Activated CD8-positive, alpha-beta memory T cell treated with anti-CD3 and anti-CD28 coated beads, Interleukin-2, amount 10 ng/mL, durations not matched to agents 7 days and 5 days (primary cell): ENCODE measurements at regions of chr22 and their contacts with region 1.

Region 1: GRCh38 chr22:28829358-28830181 is 29.2 kb upstream of the XBP1 start:
- DNase-seq: peak; percentile 85
- ATAC-seq: peak; percentile 69
- H3K4me3 Mint-ChIP-seq: no peak overlapping the region
- H3K27ac Mint-ChIP-seq: peak overlapping the region; percentile 57
- H3K4me1 Mint-ChIP-seq: peaks cover 43% of the 10 kb centered on the region
- H3K27me3 Mint-ChIP-seq: peaks cover 4% of the 10 kb centered on the region

Region 2: DNA sequence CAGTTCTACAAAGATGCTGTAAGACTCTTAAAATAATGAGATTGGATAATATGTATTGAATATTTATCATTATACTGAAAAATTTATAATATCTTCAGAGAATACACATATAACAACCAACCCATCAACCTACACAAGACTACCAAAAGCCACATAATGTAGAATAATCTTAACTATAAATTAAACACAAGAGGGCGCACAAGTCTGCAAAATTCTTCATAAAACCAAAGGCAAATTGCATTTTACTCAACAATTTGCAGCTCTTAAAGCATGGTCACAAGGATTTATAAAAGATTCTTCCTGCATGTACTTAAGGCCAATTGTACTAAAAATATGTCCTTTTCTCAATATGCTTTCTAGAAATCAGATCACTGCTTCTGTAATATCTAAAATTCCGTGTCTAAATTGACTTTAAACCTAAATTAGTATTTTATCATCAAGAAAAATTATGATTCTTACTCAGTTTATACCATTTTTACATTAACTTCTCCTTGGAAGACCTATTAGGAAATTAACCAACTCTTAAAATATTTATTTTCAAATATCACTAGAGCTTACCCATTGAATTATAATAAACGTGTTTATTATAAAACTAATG is 228.9 kb before region 1 on chr22:
- CTCF ChIA-PET with region 1: interaction called, 30 read pairs
- DNase-seq: no peak
- ATAC-seq: no peak
- H3K4me3 Mint-ChIP-seq: no peak overlapping the region
- H3K27ac Mint-ChIP-seq: no peak overlapping the region
- H3K4me1 Mint-ChIP-seq: no peaks in the 10 kb centered on the region
- H3K27me3 Mint-ChIP-seq: peaks cover 52% of the 10 kb centered on the region

Region 3: GRCh38 chr22:28750471-28750881 is 79.1 kb before region 1 on chr22:
- CTCF ChIA-PET with region 1: no interaction called
- DNase-seq: no peak
- ATAC-seq: no peak
- H3K4me3 Mint-ChIP-seq: no peak overlapping the region
- H3K27ac Mint-ChIP-seq: no peak overlapping the region
- H3K4me1 Mint-ChIP-seq: peaks cover 34% of the 10 kb centered on the region
- H3K27me3 Mint-ChIP-seq: no peaks in the 10 kb centered on the region

Region 4: GRCh38 chr22:28772633-28773460 is 56.7 kb before region 1 on chr22 and contains the start of gene CCDC117:
- CTCF ChIA-PET with region 1: interaction called, 16 read pairs
- DNase-seq: peak; percentile 97
- ATAC-seq: peak; percentile 94
- H3K4me3 Mint-ChIP-seq: peak within 1 kb of the TSS; percentile 91
- H3K27ac Mint-ChIP-seq: peak within 1 kb of the TSS; percentile 97
- H3K4me1 Mint-ChIP-seq: peaks cover 28% of the 10 kb centered on the region
- H3K27me3 Mint-ChIP-seq: peaks cover 7% of the 10 kb centered on the region
- total RNA-seq, gene CCDC117: 35.5 to 42.4 TPM

Region 5: DNA sequence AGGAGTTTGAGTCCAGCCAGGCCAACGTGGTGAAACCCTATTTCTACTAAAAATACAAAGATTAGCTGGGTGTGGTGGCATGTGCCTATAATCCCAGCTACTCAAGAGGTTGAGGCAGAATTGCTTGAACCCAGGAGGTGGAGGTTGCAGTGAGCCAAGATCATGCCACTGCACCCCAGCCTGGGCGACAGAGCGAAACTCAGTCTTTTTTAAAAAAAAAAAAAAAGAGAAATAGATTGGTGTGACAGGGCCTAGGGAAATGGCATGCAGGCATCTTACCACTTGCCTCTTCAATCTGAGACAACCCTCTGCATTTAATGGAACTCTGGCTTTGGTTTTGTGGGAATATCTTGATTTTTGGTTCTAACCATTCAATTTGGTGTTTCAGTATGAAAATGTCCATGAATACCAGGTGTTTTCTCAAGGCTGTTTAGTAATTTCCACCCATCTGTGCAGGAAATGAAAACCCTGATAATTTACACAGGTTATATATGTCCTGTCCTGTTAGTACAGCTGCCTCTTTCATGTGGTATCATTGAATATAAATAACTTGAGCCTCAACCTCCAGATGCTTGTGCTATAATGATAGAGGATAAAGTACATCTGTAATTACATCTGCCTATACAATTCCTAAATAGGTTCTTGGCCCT is 37.6 kb before region 1 on chr22:
- CTCF ChIA-PET with region 1: interaction called, 89 read pairs
- DNase-seq: no peak
- ATAC-seq: peak; percentile 48
- H3K4me3 Mint-ChIP-seq: peak overlapping the region; percentile 10
- H3K27ac Mint-ChIP-seq: peak overlapping the region; percentile 81
- H3K4me1 Mint-ChIP-seq: peaks cover 60% of the 10 kb centered on the region
- H3K27me3 Mint-ChIP-seq: no peaks in the 10 kb centered on the region

Region 6: GRCh38 chr22:28800308-28801077 is 29.1 kb before region 1 on chr22 and contains the start of gene XBP1:
- CTCF ChIA-PET with region 1: interaction called, 84 read pairs
- DNase-seq: peak; percentile 90
- ATAC-seq: peak; percentile 95
- H3K4me3 Mint-ChIP-seq: peak within 1 kb of the TSS; percentile 91
- H3K27ac Mint-ChIP-seq: peak within 1 kb of the TSS; percentile 92
- H3K4me1 Mint-ChIP-seq: peaks cover 45% of the 10 kb centered on the region
- H3K27me3 Mint-ChIP-seq: no peaks in the 10 kb centered on the region
- total RNA-seq, gene XBP1: 139 to 141 TPM

Region 7: DNA sequence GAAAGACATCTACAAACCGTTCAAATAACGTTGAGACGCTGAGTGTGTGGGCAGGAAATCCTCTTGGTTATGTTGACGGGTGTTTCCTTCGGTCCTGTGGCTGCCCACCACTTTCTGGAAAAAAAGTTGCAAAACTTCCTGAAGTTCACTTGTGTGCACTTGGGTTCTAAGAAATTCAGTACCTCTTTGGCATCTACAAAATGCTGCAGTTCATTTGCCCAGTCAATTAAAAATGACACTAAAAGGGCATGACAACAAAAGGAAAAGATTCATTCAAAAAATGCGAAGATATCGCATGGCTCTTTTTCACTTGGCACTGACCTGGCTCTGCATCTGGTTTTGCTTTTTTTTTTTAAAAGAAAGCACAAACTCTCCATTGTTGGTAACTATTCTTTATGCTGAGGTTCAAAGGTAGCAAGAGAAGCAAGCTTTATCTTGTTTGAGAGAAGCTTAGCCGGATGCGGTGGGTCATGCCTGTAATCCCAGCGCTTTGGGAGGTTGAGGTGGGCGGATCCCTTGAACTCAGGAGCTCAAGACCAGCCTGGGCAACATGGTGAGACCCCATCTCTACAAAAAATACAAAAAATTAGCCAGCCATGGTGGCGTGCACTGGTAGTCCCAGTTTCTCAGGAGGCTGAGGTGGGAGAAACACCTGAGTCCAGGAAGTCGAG is 18.6 kb before region 1 on chr22:
- CTCF ChIA-PET with region 1: interaction called, 67 read pairs
- DNase-seq: peak; percentile 81
- ATAC-seq: peak; percentile 46
- H3K4me3 Mint-ChIP-seq: peak overlapping the region; percentile 70
- H3K27ac Mint-ChIP-seq: peak overlapping the region; percentile 92
- H3K4me1 Mint-ChIP-seq: peaks cover 75% of the 10 kb centered on the region
- H3K27me3 Mint-ChIP-seq: no peaks in the 10 kb centered on the region

Region 8: GRCh38 chr22:28817919-28818909 is 11.4 kb before region 1 on chr22:
- CTCF ChIA-PET with region 1: interaction called, 67 read pairs
- DNase-seq: no peak
- ATAC-seq: no peak
- H3K4me3 Mint-ChIP-seq: no peak overlapping the region
- H3K27ac Mint-ChIP-seq: peak overlapping the region; percentile 61
- H3K4me1 Mint-ChIP-seq: peaks cover 69% of the 10 kb centered on the region
- H3K27me3 Mint-ChIP-seq: no peaks in the 10 kb centered on the region